ENCODE measurements at regions of chr16 and their contacts with region 1.

Region 1: GRCh38 chr16:82509691-82510430 is 116.9 kb upstream of the CDH13 start:
- DNase-seq: no peak
- H3K4me3 ChIP-seq: no peak overlapping the region
- H3K27ac ChIP-seq: no peak overlapping the region
- H3K4me1 ChIP-seq: no peaks in the 10 kb centered on the region
- H3K27me3 ChIP-seq: no peaks in the 10 kb centered on the region
- CTCF ChIP-seq: no peak
- POLR2A ChIP-seq: no peak

Region 2: GRCh38 chr16:82177555-82178056 is 332.3 kb before region 1 on chr16:
- intact Hi-C with region 1: loop called (anchors 5 kb)
- DNase-seq: no peak
- H3K4me3 ChIP-seq: no peak overlapping the region
- H3K27ac ChIP-seq: no peak overlapping the region
- H3K4me1 ChIP-seq: no peaks in the 10 kb centered on the region
- H3K27me3 ChIP-seq: no peaks in the 10 kb centered on the region
- CTCF ChIP-seq: no peak
- POLR2A ChIP-seq: no peak

Measured in breast epithelium (tissue), 4 donors.